A673 (cell line): ENCODE measurements at regions of chr11 and their contacts with region 1.

Region 1: GRCh38 chr11:76897233-76897632 is 36.5 kb downstream of the ACER3 start:
- DNase-seq: no peak
- H3K4me3 ChIP-seq: no peak overlapping the region
- H3K27ac ChIP-seq: no peak overlapping the region
- H3K4me1 ChIP-seq: no peaks in the 10 kb centered on the region
- H3K27me3 ChIP-seq: no peaks in the 10 kb centered on the region
- CTCF ChIP-seq: no peak

Region 2: GRCh38 chr11:76863196-76863777 is 33.9 kb before region 1 on chr11:
- CTCF ChIA-PET with region 1: no interaction called
- POLR2A ChIA-PET with region 1: no interaction called
- intact Hi-C with region 1: loop called (anchors 2 kb)
- DNase-seq: no peak
- H3K4me3 ChIP-seq: no peak overlapping the region
- H3K27ac ChIP-seq: no peak overlapping the region
- H3K4me1 ChIP-seq: peaks cover 11% of the 10 kb centered on the region
- H3K27me3 ChIP-seq: no peaks in the 10 kb centered on the region
- CTCF ChIP-seq: no peak